K562 (cell line): ENCODE measurements at regions of chr16 and their contacts with region 1.

Region 1: DNA sequence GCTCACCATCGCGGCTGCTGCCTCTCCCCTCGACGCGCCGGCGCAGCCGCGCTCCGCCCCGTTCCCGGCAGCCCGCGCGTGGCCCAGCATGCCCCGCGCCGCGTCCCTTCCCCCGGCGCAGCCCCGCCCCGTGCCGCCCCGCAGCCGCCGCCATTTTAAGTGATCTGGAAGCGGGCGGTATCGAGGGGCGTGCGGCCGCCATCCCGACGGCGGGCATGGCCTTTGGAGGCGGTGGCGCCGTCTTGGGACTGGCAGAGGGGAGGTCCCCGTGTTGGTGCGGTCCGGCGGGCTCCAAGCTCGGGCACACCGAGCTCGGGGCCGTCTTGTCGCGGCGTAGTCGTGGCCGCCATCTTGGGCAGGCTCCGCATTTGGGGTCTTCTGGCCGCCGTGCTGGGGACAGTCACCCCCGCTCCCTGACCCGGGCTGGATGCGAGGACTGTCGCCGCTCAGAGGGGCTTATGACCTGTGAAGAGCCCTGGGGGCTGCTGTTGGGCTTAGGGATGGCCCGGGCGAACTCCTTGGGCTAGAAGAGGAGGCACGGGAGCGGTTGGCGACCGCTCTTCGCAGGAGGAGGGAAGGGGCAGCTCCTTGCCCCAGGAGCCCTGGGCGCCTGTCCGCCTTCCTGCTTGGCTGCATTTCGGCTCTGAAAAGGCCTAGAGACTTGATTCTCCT is at the start of gene ELOB:
- DNase-seq: peak; percentile 92 to 95 (median 93)
- ATAC-seq: peak; percentile 90
- H3K4me3 ChIP-seq: peak within 1 kb of the TSS; percentile 97
- H3K27ac ChIP-seq: peak within 1 kb of the TSS; percentile 98
- H3K4me1 ChIP-seq: peaks cover 11 to 35% of the 10 kb centered on the region in 2 experiments; a peak in 4 of 5 replicates
- H3K27me3 ChIP-seq: no peaks in the 10 kb centered on the region
- CTCF ChIP-seq: no peak
- EP300 ChIP-seq: no peak
- POLR2A ChIP-seq: peak; percentile 87
- RAD21 ChIP-seq: 0 out of 4 replicates have a peak, but pooled peaks of 1 of the 2 experiments have one; percentile 11
- polyA plus RNA-seq, gene ELOB: 764 to 791 TPM

Region 2: DNA sequence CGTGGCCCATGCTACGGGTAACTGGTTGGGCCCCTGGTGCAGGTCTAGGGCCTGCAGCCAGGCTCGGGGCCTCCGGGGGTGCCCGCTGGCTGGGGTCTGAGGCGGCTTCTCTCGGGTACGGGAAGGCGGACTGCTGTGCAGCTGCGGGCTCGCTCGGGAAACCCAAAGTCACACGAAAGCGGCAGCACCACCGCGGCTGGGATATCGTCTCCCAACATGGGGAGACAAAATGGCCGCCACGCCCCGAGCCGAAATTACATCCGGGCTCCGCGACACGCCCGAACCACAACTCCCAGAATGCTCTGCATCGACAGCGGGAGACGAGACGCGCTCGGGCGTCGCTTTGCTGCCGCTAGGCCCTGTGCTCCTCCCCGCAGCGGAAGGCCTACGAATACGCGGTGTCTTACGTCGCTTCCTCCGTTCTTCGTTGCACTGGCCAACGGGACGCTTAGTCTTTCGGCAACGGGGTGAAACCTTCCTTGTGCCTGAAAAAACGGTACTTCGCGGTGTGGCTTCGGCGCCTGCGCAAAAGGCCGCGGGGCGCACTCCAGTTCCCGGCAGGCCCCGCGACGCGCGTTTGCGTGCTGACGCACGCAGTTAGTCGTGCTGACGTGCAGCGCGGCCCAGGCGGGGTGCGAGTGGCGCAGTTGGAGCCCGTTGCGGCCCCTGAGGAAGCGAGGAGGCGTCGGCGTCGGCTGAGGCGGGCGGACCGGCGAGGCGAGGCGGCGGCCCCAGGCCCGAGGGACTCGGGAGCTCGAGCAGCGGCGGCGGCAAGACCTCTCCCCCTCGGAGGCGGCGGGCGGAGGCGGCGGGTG is 25.1 kb before region 1 on chr16 and contains the start of gene SRRM2:
- CTCF ChIA-PET with region 1: interaction called, 4 read pairs
- POLR2A ChIA-PET with region 1: interaction called, 18 read pairs
- in situ Hi-C with region 1: no loop called
- intact Hi-C with region 1: no loop called
- DNase-seq: peak; percentile 82 to 97 (median 88)
- ATAC-seq: peak; percentile 90
- H3K4me3 ChIP-seq: peak within 1 kb of the TSS; percentile 79
- H3K27ac ChIP-seq: peak within 1 kb of the TSS; percentile 100
- H3K4me1 ChIP-seq: peaks cover 21 to 25% of the 10 kb centered on the region in 2 experiments
- H3K27me3 ChIP-seq: no peaks in the 10 kb centered on the region
- CTCF ChIP-seq: peak in 1 of 3 experiments; percentile 4; a peak in 2 of 6 replicates
- EP300 ChIP-seq: no peak
- POLR2A ChIP-seq: peak; percentile 94
- RAD21 ChIP-seq: no peak
- polyA plus RNA-seq, gene SRRM2: 26.7 to 27.6 TPM

Region 3: DNA sequence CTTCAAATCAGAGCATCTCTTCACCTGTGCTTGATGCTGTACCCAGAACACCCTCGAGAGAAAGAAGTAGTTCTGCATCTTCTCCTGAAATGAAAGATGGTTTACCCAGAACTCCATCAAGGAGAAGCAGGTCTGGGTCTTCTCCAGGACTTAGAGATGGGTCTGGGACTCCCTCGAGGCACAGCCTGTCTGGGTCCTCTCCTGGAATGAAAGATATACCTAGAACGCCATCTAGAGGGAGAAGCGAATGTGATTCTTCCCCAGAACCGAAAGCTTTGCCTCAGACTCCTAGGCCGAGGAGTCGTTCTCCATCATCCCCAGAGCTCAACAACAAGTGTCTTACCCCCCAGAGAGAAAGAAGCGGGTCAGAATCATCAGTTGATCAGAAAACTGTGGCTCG is 12.6 kb before region 1 on chr16:
- CTCF ChIA-PET with region 1: no interaction called
- POLR2A ChIA-PET with region 1: interaction called, 28 read pairs
- in situ Hi-C with region 1: no loop called
- intact Hi-C with region 1: no loop called
- DNase-seq: no peak
- ATAC-seq: no peak
- H3K4me3 ChIP-seq: no peak overlapping the region
- H3K27ac ChIP-seq: no peak overlapping the region
- H3K4me1 ChIP-seq: peaks cover 8 to 36% of the 10 kb centered on the region in 2 experiments; a peak in 4 of 5 replicates
- H3K27me3 ChIP-seq: no peaks in the 10 kb centered on the region
- CTCF ChIP-seq: no peak
- EP300 ChIP-seq: no peak
- POLR2A ChIP-seq: no peak
- RAD21 ChIP-seq: no peak

Region 4: GRCh38 chr16:2791174-2791573 is 13.8 kb after region 1 on chr16:
- CTCF ChIA-PET with region 1: no interaction called
- POLR2A ChIA-PET with region 1: interaction called, 10 read pairs
- in situ Hi-C with region 1: no loop called
- intact Hi-C with region 1: no loop called
- DNase-seq: no peak
- ATAC-seq: no peak
- H3K4me3 ChIP-seq: no peak overlapping the region
- H3K27ac ChIP-seq: no peak overlapping the region
- H3K4me1 ChIP-seq: peaks cover 6 to 12% of the 10 kb centered on the region in 2 experiments
- H3K27me3 ChIP-seq: peaks cover 22 to 44% of the 10 kb centered on the region in 2 experiments; a peak in 4 of 5 replicates
- CTCF ChIP-seq: no peak
- EP300 ChIP-seq: no peak
- POLR2A ChIP-seq: no peak
- RAD21 ChIP-seq: no peak

Region 5: GRCh38 chr16:2816751-2817339 is 39.5 kb after region 1 on chr16 and contains the start of gene PRSS21:
- CTCF ChIA-PET with region 1: no interaction called
- POLR2A ChIA-PET with region 1: interaction called, 7 read pairs
- in situ Hi-C with region 1: no loop called
- intact Hi-C with region 1: loop called (anchors 5 kb)
- DNase-seq: peak in 1 of 4 experiments; percentile 90
- ATAC-seq: peak; percentile 90
- H3K4me3 ChIP-seq: peak within 1 kb of the TSS; percentile 82
- H3K27ac ChIP-seq: peak within 1 kb of the TSS; percentile 89
- H3K4me1 ChIP-seq: peaks cover 13 to 62% of the 10 kb centered on the region in 2 experiments; a peak in 4 of 5 replicates
- H3K27me3 ChIP-seq: no peaks in the 10 kb centered on the region
- CTCF ChIP-seq: peak; percentile 53 to 78 (median 66)
- EP300 ChIP-seq: no peak
- POLR2A ChIP-seq: peak; percentile 68
- RAD21 ChIP-seq: peak; percentile 26 to 37; a peak in 2 of 4 replicates
- polyA plus RNA-seq, gene PRSS21: 12.1 to 21.0 TPM

Region 6: DNA sequence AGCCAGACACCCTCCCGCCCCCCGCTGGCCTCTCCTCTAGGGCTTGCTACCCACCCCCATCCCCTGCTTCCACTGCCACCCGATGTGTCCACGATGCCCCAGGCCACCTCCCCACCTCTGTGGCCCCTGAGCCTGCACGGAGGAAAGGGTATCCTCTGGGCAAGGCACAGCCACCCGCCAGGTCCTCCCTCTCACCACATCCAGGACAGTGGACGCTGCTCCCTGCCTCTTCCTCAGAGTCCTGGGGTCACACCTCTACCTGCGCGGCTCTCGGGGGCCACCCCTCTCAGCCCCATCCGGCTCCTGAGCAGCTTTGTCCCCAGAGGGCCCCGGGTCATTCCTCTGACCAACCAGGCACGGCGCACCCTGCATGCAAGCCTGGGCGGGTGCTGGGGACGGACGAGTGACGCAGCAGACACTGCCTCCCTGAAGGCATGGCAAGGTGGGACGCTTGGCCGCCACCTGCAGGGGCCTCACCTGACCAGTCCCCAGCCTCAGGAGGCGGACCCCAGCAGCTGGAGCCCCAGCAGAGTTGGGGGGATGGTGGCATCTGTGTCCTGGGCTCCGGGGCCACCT is 159.2 kb after region 1 on chr16:
- CTCF ChIA-PET with region 1: no interaction called
- POLR2A ChIA-PET with region 1: no interaction called
- in situ Hi-C with region 1: no loop called
- intact Hi-C with region 1: no loop called
- DNase-seq: no peak
- ATAC-seq: no peak
- H3K4me3 ChIP-seq: no peak overlapping the region
- H3K27ac ChIP-seq: no peak overlapping the region
- H3K4me1 ChIP-seq: peaks cover 0 to 6% of the 10 kb centered on the region in 2 experiments; a peak in 2 of 5 replicates
- H3K27me3 ChIP-seq: no peaks in the 10 kb centered on the region
- CTCF ChIP-seq: no peak
- EP300 ChIP-seq: no peak
- POLR2A ChIP-seq: no peak
- RAD21 ChIP-seq: no peak